Activated CD4-positive, alpha-beta T cell treated with anti-CD3 and anti-CD28 coated beads for 36 hours (primary cell): ENCODE measurements at regions of chr12 and their contacts with region 1.

Region 1: DNA sequence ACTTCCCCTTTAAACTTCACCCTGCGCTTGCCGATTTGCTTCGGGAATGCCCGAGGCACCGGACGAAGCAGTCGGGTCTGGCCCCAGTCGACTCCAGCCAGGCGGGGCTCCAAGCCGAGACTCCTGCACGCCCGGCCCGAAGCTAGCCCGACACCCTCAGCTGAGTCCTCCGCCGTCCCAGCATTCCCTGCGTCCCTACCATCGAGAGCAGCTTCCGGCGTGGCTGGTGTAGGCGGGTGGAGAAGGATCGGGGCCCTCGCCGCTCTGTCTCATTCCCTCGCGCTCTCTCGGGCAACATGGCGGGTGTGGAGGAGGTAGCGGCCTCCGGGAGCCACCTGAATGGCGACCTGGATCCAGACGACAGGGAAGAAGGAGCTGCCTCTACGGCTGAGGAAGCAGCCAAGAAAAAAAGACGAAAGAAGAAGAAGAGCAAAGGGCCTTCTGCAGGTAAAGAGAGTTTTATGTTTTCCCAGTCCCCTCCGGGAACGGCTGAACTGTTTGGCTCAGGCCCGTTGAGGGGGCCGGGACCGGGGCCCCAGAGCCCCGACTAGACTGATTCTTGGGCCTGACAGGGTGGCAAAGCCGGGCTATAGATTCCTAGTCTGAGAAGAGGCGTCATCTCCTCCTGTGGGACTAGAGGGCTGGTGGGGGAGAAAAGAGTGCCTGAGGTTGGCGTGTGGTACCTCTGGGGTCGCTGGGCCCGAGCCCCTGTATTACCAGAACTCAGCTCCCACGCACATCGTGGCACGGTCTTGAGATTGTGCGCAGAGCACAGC is at the start of gene METAP2:
- DNase-seq: peak; percentile 97
- ATAC-seq: peak; percentile 98
- H3K4me3 Mint-ChIP-seq: peak within 1 kb of the TSS; percentile 96
- H3K27ac Mint-ChIP-seq: peak within 1 kb of the TSS; percentile 100
- H3K4me1 Mint-ChIP-seq: peaks cover 50% of the 10 kb centered on the region
- H3K27me3 Mint-ChIP-seq: no peaks in the 10 kb centered on the region
- total RNA-seq, gene METAP2: 136 to 152 TPM

Region 2: DNA sequence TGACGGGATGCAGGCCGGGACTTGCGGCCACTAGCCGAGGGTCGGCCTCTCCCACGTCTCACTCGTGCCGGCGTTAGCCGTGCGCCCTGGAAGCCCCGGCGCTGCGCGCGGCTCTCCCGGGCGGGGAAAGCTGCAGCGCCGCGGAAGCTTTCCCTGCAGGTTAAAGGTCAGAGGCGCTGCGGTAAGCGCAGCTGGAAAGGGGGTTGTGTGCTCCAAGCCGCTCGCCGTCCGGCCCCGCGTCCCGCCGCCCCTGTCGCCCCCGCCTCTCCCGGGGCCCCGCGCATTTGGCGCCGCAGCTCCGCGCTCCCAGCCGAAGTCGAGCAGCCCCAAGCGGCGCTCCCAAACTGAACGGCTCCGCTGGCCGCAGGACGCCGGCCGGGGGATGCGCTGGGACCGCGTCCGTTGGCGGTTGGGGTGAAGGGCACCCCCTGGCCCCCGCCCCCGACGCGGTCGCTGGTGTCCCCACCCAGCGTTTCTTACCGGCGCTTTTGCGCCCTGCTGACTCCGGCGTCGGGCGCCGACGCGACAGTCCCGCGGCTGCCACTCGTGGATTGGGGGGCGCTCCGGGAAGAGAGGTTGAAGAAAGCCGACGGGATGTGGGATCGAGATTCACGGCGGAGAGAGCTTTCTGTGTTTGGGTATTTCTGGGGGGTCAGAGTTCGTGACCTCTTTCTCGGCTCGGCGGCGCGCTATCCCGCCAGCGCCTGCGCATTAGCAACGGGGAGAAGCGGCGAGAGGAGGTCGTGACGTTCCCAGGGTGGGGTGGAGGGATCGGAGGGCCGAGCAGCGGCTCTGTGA is 401.0 kb before region 1 on chr12 and contains the start of gene NR2C1:
- CTCF ChIA-PET with region 1: no interaction called
- POLR2A ChIA-PET with region 1: interaction called, 7 read pairs
- intact Hi-C with region 1: loop called (anchors 1 to 5 kb)
- DNase-seq: peak; percentile 95
- ATAC-seq: peak; percentile 99
- H3K4me3 Mint-ChIP-seq: peak within 1 kb of the TSS; percentile 84
- H3K27ac Mint-ChIP-seq: peak within 1 kb of the TSS; percentile 82
- H3K4me1 Mint-ChIP-seq: peaks cover 12% of the 10 kb centered on the region
- H3K27me3 Mint-ChIP-seq: no peaks in the 10 kb centered on the region
- total RNA-seq, gene NR2C1: 27.6 to 39.3 TPM

Region 3: DNA sequence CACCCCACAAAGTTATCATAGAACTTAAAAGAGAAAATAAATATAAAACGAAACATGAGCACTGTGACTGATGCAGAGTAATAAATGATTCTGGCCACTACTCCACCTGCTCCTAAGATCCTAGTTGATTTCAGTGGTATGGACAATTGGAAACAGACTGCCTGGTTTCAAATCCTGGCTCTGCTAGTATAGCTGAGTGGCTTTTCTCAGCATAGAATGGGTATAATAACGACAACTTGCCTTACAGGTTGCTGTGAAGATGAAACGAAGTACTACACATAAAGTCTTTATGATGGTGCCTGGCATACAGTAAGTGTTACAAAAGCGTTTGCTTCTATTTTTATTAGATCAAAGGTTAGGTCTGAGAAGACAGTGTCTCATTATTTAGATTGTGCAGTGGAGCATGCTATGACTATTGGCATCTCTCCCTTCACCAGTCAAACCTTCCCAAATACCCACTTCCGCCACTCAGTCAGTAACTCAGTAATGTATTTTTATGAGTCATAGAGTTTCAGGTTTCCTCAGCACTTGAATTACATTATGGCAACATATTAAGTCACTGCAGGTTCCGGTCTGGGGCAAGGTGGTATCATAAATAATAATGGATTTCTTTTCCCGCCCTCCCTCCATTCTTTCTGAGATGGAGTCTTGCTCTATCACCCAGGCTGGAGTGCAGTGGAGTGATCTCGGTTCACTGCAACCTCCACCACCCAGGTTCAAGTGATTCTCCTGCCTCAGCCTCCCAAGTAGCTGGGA is 371.0 kb before region 1 on chr12:
- CTCF ChIA-PET with region 1: no interaction called
- POLR2A ChIA-PET with region 1: no interaction called
- intact Hi-C with region 1: loop called in 1 of 2 experiments (anchors 5 kb)
- DNase-seq: peak; percentile 68
- ATAC-seq: peak; percentile 99
- H3K4me3 Mint-ChIP-seq: no peak overlapping the region
- H3K27ac Mint-ChIP-seq: peak overlapping the region; percentile 38
- H3K4me1 Mint-ChIP-seq: peaks cover 14% of the 10 kb centered on the region
- H3K27me3 Mint-ChIP-seq: no peaks in the 10 kb centered on the region

Region 4: GRCh38 chr12:95548539-95549391 is 74.7 kb after region 1 on chr12:
- CTCF ChIA-PET with region 1: no interaction called
- POLR2A ChIA-PET with region 1: no interaction called
- intact Hi-C with region 1: loop called in 1 of 2 experiments (anchors 1 kb)
- DNase-seq: peak; percentile 82
- ATAC-seq: peak; percentile 83
- H3K4me3 Mint-ChIP-seq: peak overlapping the region; percentile 84
- H3K27ac Mint-ChIP-seq: peak overlapping the region; percentile 56
- H3K4me1 Mint-ChIP-seq: peaks cover 37% of the 10 kb centered on the region
- H3K27me3 Mint-ChIP-seq: peaks cover 16% of the 10 kb centered on the region

Region 5: GRCh38 chr12:95858479-95859343 is 384.6 kb after region 1 on chr12 and contains the start of gene SNRPF:
- CTCF ChIA-PET with region 1: no interaction called
- POLR2A ChIA-PET with region 1: no interaction called
- intact Hi-C with region 1: loop called in 1 of 2 experiments (anchors 2 kb)
- DNase-seq: peak; percentile 95
- ATAC-seq: peak; percentile 95
- H3K4me3 Mint-ChIP-seq: no peak within 1 kb of the TSS
- H3K27ac Mint-ChIP-seq: peak within 1 kb of the TSS; percentile 59
- H3K4me1 Mint-ChIP-seq: peaks cover 28% of the 10 kb centered on the region
- H3K27me3 Mint-ChIP-seq: peaks cover 3% of the 10 kb centered on the region
- total RNA-seq, gene SNRPF: 23.1 to 61.1 TPM

Region 6: GRCh38 chr12:95942524-95943329 is 468.7 kb after region 1 on chr12 and contains the start of gene CCDC38:
- CTCF ChIA-PET with region 1: no interaction called
- POLR2A ChIA-PET with region 1: no interaction called
- intact Hi-C with region 1: loop called in 1 of 2 experiments (anchors 2 kb)
- DNase-seq: peak; percentile 91
- ATAC-seq: peak; percentile 98
- H3K4me3 Mint-ChIP-seq: peak within 1 kb of the TSS; percentile 84
- H3K27ac Mint-ChIP-seq: peak within 1 kb of the TSS; percentile 91
- H3K4me1 Mint-ChIP-seq: peaks cover 4% of the 10 kb centered on the region
- H3K27me3 Mint-ChIP-seq: no peaks in the 10 kb centered on the region
- total RNA-seq, gene CCDC38: 0.21 TPM in 1 of 2 experiments, not detected in the other